Activated CD4-positive, alpha-beta memory T cell treated with anti-CD3 and anti-CD28 coated beads, Interleukin-2, amount 10 ng/mL, durations not matched to agents 7 days and 5 days (primary cell): ENCODE measurements at regions of chr4 and their contacts with region 1.

Region 1: DNA sequence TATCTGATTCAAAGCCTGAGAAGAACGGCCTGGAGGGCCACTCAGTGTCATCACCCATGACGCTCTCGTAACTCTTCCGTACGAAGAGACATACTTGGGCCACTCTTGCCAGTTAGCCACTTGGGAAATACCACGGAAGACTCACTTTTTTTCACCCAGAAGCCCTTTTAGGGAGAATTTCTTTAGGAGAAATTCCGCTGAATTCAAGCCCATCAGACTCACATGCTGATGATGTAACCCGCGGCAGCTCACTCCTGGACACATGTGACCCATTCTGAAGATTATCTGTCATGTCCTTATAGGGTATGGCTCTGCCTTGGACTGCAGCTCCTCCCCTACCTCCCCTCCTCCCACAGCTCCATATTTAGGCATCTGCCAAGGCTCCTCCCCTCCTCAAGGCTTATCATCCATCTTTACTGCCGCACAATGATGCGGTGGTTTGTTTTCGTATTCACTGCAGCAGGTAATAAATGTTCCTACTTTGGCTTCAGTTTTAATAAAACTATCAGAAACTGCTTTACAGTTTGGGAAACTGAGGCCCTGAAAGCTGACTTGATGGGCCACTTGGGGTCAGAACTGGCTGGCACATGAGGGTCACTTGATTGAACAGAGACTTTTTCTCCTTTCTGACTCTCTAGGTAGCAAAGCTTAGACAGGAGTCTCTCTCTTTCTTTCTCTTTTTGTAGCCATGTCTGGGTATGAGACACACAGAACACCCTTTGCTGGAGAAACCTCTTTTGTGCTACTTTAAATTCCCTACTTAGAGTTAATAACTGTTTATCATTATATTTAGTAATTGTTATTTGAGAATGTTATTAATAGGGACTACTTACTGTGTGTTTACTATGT is 42.1 kb downstream of the RHOH start:
- DNase-seq: peak; percentile 87
- H3K4me3 Mint-ChIP-seq: peak overlapping the region; percentile 67
- H3K27ac Mint-ChIP-seq: peak overlapping the region; percentile 93
- H3K4me1 Mint-ChIP-seq: peaks cover 89% of the 10 kb centered on the region
- H3K27me3 Mint-ChIP-seq: no peaks in the 10 kb centered on the region

Region 2: DNA sequence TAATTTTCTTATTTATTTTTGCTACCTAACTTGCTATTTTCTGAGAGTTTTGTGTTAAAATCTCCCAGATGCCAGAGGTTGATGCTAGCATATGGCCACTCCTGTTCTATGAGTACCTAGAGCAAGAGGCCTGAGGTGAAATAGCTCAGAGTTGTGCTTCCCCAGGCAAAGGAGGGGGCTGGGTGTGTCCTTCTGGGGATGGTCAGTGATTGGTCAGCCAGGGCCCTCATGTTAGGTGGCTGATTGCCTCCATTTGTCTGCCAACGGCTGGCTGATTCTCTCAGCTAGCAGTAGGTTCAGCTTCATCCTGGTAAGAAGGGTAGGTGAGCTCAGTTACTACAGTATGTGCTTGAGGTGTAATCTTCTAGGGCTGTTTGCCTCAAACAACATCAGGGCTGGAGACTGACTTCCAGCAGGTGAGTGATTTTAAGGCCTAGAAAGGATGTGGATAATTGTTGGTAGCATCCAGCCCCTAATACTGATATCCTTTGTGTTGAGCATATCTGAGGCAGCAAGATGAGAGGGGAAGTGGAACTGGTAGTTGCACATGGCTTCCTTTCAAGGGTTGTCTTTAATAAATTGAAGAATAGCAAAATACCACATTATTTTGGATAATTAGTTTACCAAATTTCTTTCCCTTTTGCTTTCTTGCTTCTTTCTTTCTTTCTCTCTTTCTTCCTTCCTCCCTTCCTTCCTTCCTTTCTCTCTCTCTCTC is 104.6 kb before region 1 on chr4:
- CTCF ChIA-PET with region 1: no interaction called
- POLR2A ChIA-PET with region 1: no interaction called
- DNase-seq: no peak
- H3K4me3 Mint-ChIP-seq: no peak overlapping the region
- H3K27ac Mint-ChIP-seq: no peak overlapping the region
- H3K4me1 Mint-ChIP-seq: no peaks in the 10 kb centered on the region
- H3K27me3 Mint-ChIP-seq: no peaks in the 10 kb centered on the region

Region 3: DNA sequence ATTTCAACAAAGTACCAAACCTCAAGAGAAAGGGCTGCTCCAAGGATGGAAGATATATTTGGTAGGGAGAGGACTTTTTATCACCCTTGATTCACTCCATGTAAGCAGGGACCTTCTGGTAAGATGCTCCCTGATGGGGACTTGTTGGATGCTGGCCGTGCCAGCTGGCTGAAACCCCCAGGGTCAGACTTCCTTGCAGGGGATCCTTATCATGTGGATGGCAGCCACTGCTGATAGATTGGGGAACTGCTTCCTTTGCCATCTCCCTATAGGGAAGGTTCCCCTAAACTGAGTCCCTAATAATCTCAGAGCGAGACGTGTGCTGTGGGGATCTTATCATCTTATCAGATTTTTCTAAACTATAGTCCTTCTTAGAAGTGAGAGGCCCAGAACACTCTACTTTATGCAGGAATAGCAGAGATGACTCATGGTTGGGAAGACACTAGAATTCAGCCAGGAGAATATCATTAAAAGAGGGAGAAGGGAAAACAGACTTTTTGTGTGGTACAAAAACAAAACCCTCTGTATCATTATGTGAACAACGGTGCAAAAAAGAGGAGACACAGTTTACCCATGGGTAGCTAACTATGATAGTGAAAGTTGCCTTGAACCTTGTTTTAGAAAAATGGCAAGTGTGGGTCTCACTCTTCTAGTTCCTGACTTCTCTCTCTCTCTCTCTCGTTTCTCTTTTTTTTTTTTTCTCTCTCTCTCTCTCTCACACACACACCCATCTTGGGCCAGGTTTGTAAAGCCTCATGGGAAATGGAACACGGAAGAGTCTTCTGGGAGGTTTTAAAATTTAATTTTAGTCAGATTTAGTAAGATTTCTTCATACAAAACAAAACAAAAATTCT is 26.0 kb before region 1 on chr4:
- CTCF ChIA-PET with region 1: interaction called, 5 read pairs
- POLR2A ChIA-PET with region 1: interaction called, 12 read pairs
- DNase-seq: no peak
- H3K4me3 Mint-ChIP-seq: peak overlapping the region; percentile 74
- H3K27ac Mint-ChIP-seq: peak overlapping the region; percentile 80
- H3K4me1 Mint-ChIP-seq: peaks cover 92% of the 10 kb centered on the region
- H3K27me3 Mint-ChIP-seq: no peaks in the 10 kb centered on the region